Breast epithelium (tissue), 4 donors: ENCODE measurements at regions of chr18 and their contacts with region 1.

Region 1: GRCh38 chr18:23844991-23845680 is 155.9 kb downstream of the LAMA3 start:
- DNase-seq: peak in 1 of 2 donors; percentile 49
- H3K4me3 ChIP-seq: no peak overlapping the region
- H3K27ac ChIP-seq: no peak overlapping the region
- H3K4me1 ChIP-seq: no peaks in the 10 kb centered on the region
- H3K27me3 ChIP-seq: no peaks in the 10 kb centered on the region
- CTCF ChIP-seq: no peak
- POLR2A ChIP-seq: no peak

Region 2: DNA sequence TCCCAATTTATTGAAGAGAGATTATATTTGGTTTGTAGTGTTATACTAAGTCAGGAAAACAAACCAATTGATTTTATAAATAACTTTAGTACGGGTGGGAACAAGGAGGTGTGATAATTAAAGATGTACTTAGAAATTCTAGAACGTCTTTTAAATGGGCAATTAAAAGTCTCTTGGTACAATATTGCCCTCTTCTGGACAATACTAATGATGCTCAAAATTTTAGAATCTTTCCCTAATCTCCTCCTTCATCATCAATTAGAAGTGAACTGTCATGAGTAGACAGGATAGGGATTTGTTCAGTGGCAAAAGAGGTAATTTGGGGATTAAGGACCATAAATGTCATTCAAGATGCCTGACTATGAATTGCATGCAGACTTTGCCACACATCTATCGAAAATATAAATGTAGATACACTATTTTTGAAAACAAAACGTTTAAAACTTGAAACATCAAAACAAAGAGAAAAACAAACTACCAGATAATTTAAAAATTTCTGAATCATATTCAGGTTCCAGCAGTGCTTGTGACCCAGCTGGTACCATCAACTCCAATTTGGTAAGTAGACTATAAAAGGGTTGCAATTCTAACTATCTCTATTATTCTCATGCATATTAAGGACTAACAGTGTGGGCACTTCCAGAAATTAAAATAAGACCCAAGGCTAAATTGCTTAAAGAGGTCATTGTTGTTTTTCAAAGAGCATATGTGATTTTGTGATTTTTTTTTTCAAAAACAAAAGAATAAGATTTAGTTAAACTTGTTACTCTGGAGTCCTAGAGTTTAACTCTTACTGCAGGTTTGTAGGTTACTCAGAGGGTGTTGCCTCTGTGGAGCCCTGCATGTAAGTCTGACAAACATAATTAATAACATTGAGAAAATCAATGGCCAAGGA is 32.3 kb before region 1 on chr18:
- intact Hi-C with region 1: no loop called
- DNase-seq: no peak
- H3K4me3 ChIP-seq: no peak overlapping the region
- H3K27ac ChIP-seq: no peak overlapping the region
- H3K4me1 ChIP-seq: no peaks in the 10 kb centered on the region
- H3K27me3 ChIP-seq: no peaks in the 10 kb centered on the region
- CTCF ChIP-seq: peak; percentile 17 to 68 (median 66)
- POLR2A ChIP-seq: no peak

Region 3: GRCh38 chr18:23864624-23865023 is 19.5 kb after region 1 on chr18:
- intact Hi-C with region 1: loop called (anchors 1 kb)
- DNase-seq: peak in 1 of 2 donors; percentile 16
- H3K4me3 ChIP-seq: no peak overlapping the region
- H3K27ac ChIP-seq: no peak overlapping the region
- H3K4me1 ChIP-seq: no peaks in the 10 kb centered on the region
- H3K27me3 ChIP-seq: no peaks in the 10 kb centered on the region
- CTCF ChIP-seq: no peak
- POLR2A ChIP-seq: no peak